ENCODE measurements at regions of chr2 and their contacts with region 1.

Region 1: DNA sequence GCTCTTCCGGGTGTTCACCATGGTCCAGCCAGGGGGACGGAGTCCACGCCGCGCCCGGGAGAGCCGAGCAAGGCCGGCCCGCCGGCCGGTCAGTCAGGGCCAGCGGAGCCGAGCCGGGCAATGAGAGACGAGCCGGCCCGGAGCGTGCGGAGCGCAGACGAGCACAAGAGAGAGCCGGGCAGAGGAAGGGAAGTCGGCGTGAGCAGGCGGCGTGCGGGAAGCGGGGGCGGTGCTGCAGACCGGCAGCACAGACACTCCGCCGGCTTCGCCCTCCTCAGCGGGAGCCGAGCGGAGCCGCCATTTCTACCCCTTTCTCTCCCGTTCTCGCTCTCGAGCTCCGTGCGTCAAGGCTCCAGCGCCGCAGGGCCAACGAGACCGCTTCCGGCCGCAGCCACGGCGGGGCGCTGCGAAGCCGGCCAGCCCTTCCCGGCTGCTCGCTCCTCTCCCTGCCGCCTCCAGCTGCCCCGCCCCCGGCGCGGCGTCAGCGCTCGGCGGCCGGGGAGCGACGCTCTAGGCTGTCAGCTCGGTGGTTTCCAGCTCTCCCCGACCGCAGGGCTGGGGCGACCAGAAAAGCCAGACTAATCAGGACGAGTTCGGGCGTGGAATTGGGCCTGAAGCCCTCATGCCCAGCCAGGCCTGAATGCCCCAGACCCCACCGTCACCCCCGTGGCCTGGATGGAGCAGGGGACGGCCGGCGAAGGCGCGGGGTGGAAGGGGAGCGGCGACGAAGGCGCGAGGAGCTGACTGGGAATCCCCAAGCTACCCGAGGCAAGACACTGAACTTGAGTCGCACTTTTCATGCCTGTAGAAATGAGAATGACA is at the start of gene ATAD2B:
- DNase-seq: peak; percentile 46
- H3K4me3 ChIP-seq: peak within 1 kb of the TSS; percentile 85
- CTCF ChIP-seq: peak; percentile 91

Region 2: DNA sequence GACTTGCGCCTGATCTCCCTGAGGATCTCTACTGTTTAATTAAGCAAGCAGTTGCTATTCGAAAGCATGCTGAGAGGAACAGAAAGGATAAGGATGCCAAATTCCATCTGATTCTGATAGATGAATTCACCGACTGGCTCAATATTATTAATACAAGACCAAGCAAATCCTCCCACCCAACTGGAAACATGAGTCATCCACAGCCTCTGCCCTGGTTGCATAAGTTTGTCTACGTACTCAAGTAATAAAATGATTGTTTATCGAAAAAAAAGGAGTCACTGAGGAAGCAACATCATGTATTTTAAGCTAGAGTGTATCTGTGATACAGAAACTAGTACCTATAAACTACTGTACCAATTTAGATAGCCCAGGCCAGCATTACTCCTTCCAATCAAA is 26.0 kb before region 1 on chr2:
- CTCF ChIA-PET with region 1: interaction called, 23 read pairs
- POLR2A ChIA-PET with region 1: interaction called, 3 read pairs
- DNase-seq: peak; percentile 53
- H3K4me3 ChIP-seq: no peak overlapping the region
- CTCF ChIP-seq: no peak

Region 3: DNA sequence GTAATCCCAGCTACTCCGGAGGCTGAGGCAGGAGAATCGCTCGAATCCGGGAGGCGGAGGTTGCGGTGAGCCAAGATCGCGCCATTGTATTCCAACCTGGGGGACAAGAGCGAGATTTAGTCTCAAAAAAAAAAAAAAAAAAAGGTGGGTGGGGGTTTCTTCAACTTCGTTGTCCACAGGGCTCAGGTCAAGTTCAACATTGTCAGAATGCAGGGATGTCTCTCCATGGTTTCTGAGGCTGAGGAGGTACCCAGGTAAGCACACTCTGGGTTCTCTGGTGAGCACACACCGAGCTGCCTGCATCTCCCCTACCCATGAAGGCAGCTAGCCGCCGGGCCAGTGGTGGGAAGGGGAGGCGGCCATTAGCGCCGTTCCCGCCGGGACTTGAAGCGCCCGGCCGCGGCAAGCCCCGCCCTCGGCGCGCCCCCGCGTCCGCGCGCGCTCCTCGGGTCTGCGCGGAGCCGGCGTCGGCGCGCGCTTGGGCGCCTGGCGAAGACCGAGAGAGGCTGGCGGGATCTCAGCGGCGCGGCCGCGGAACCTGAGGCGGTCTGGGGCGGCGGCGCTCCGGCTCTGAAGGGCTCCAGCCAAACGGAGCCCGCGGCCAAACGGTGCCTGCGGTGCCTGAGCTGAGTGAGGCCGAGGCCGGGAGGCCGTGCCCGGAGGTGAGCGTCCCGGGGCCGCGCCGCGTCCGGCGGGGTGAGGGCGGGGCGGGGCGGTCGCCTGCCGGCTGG is 13.2 kb after region 1 on chr2 and contains the start of gene UBXN2A:
- CTCF ChIA-PET with region 1: interaction called, 47 read pairs
- POLR2A ChIA-PET with region 1: interaction called, 22 read pairs
- DNase-seq: no peak
- H3K4me3 ChIP-seq: peak within 1 kb of the TSS; percentile 84
- CTCF ChIP-seq: no peak

Region 4: GRCh38 chr2:24075915-24076848 is 149.2 kb after region 1 on chr2 and contains the start of gene SF3B6:
- CTCF ChIA-PET with region 1: interaction called, 12 read pairs
- POLR2A ChIA-PET with region 1: interaction called, 10 read pairs
- DNase-seq: peak; percentile 88
- H3K4me3 ChIP-seq: peak within 1 kb of the TSS; percentile 97
- CTCF ChIP-seq: no peak